ENCODE measurements at regions of chr1 and their contacts with region 1.

Region 1: DNA sequence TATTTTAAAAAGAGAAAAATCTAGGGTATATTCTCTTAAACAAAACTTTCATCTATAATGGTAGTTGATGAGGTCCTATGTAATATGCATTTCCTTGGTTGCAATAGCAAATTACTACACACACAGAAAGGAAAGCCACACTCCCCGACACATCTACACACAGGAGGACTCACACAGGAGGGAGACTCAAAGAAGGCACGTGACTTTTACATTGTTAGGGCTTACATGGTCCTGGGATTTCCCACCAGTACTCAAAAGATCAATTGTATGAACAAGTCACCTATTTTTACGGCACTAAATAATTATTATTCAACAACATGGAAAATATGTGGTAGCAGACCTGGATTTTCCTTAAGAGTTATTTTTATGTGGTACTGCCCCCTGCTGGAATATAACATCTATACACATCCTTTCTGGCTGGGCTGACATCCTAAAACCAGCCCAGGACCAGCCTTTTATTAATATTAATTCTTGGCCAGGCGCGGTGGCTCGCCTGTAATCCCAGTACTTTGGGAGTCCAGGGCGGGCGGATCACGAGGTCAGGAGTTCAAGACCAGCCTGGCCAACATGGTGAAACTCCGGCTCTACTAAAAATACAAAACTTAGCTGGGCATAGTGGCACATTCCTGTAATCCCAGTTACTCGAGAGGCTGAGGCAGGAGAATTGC is 33.9 kb upstream of the LGALS8 start:
- DNase-seq: peak; percentile 49
- H3K4me3 ChIP-seq: no peak overlapping the region
- H3K27ac ChIP-seq: no peak overlapping the region
- H3K4me1 ChIP-seq: no peaks in the 10 kb centered on the region
- H3K27me3 ChIP-seq: no peaks in the 10 kb centered on the region
- CTCF ChIP-seq: peak; percentile 59 to 89 (median 72)
- POLR2A ChIP-seq: no peak

Region 2: DNA sequence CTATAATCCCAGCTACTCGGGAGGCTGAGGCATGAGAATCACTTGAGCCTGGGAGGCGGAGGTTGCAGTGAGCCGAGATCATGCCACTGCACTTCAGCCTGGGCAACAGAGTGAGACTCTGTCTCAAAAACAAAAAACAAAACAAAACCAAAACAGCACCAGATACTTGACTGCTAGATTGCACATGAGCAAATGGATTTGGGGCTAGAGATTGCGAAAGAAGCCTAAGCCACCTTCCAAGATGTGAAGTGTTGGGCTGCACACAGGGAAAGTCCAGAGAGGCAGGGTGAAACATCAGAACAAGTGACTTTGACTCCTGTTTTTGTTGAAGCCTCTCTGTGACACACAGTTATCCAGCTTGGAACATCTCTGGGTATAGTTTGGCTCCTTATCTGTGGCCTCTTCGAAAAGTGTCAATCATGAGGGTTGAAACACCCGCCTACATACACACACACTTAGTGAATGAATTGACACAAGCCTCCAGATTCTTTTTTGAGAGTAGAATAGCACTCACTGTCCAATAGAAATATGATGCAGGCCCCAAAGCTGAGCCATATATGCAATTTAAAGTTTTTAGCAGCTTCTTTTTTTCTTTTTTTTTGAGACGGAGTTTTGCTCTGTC is 381.7 kb before region 1 on chr1:
- intact Hi-C with region 1: loop called (anchors 2 kb)
- DNase-seq: no peak
- H3K4me3 ChIP-seq: no peak overlapping the region
- H3K27ac ChIP-seq: no peak overlapping the region
- H3K4me1 ChIP-seq: no peaks in the 10 kb centered on the region
- H3K27me3 ChIP-seq: no peaks in the 10 kb centered on the region
- CTCF ChIP-seq: no peak
- POLR2A ChIP-seq: no peak

Region 3: DNA sequence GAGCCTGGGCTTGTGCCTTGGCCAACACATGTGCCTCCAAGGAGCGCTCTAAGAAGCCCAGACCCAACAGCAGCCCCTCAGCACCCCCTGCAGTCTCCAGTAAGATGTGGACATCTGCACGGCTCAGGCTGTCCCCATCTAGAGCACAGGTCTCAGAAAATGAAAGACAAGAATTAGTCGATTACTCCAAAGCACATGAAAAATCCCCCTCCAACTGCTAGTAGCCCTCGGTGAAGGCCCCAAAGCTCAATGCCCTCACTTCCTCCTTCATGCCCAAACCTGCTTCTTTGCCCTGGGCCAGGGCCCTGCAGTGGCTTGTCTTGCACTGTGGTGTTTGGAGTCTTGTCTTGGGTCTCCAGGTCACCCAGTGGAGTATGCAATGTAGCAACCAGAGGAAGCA is 186.2 kb before region 1 on chr1:
- intact Hi-C with region 1: no loop called
- DNase-seq: no peak
- H3K4me3 ChIP-seq: no peak overlapping the region
- H3K27ac ChIP-seq: no peak overlapping the region
- H3K4me1 ChIP-seq: no peaks in the 10 kb centered on the region
- H3K27me3 ChIP-seq: no peaks in the 10 kb centered on the region
- CTCF ChIP-seq: no peak
- POLR2A ChIP-seq: no peak

Region 4: DNA sequence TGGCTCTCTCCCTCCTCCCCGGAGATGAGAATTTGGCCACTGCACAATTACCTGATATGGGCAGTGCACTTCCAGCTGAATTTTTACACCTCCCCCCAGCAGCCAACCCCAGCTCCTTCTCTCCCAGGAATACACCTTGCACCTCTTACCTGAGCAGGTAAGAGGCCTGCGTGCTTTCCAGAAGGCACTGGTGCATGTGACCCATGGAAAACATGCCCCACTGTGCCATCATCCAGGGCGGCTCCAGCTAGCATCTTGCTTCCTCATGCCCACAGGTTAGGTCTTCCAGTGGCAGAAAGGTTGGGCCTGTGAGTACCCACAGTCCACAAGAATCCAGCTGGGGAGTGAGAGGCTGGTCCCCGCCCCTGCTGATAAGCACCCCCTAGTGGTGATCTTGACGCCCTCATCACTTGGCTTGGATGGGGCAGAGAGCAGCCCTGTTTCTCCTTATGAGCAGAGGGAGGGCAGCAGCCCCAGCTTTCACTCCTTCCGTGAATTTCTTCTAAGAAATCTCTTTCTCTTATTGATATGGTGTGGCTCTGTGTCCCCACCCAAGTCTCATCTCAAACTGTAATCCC is 38.0 kb before region 1 on chr1:
- intact Hi-C with region 1: no loop called
- DNase-seq: no peak
- H3K4me3 ChIP-seq: no peak overlapping the region
- H3K27ac ChIP-seq: no peak overlapping the region
- H3K4me1 ChIP-seq: no peaks in the 10 kb centered on the region
- H3K27me3 ChIP-seq: no peaks in the 10 kb centered on the region
- CTCF ChIP-seq: peak in 3 of 4 experiments; percentile 10 to 25 (median 19)
- POLR2A ChIP-seq: no peak

Region 5: GRCh38 chr1:236686815-236687160 is 196.9 kb after region 1 on chr1:
- intact Hi-C with region 1: no loop called
- DNase-seq: no peak
- H3K4me3 ChIP-seq: peak overlapping the region; percentile 19 to 30
- H3K27ac ChIP-seq: no peak overlapping the region
- H3K4me1 ChIP-seq: no peaks in the 10 kb centered on the region
- H3K27me3 ChIP-seq: peaks cover 4% of the 10 kb centered on the region
- CTCF ChIP-seq: no peak
- POLR2A ChIP-seq: no peak

Measured in prostate gland (tissue), 2 donors.